Sciatic nerve (tissue), 2 donors: ENCODE measurements at regions of chrX and their contacts with region 1.

Region 1: DNA sequence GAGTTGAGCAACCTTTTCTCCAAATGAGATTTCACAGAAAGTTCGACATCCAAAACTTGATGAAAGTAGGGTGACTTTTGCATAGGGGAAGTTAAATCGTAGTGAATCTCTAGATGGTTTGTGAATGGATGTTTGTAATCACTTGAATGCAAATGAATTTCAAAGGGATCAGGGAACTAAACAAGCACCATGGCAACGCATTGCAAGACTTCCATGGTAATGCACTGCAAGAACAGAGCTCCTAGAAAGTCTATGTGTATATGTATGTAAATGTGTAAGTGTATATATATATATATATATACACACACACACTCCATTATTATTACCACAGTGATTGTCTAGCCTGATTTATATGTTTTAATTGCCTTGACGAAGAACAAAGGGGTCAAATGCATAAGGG is 27.3 kb downstream of the INTS6L start:
- DNase-seq: no peak
- ATAC-seq: no peak

Region 2: GRCh38 chrX:134898440-134898839 is 649.3 kb before region 1 on chrX:
- intact Hi-C with region 1: no loop called
- DNase-seq: no peak
- ATAC-seq: no peak

Region 3: DNA sequence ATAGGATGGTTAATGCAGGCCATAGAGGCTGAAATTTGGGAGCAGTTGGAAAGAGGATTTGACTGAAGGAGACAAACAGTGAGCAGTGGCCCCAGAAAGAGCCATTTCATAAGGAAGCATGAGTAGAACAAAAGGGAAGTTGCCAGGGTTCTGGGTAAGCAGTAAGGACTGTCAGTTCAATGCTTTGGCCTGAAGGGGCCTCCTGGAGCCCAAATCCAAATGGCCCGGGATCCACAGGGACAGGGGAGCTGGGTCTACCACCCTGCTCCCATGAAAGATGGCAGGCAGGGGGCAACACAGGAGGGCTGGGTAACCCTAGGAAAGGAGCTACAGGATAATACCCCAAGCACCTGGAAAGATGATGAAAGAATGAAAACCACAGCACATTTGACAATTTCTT is 31.4 kb before region 1 on chrX:
- intact Hi-C with region 1: loop called (anchors 1 kb)
- DNase-seq: no peak
- ATAC-seq: no peak